ENCODE measurements at regions of chr2 and their contacts with region 1.

Region 1: GRCh38 chr2:230798769-230799399 is 65.9 kb upstream of the ITM2C start:
- DNase-seq: no peak
- ATAC-seq: no peak
- H3K4me3 ChIP-seq: no peak overlapping the region
- H3K27ac ChIP-seq: no peak overlapping the region
- H3K4me1 ChIP-seq: peaks cover 8% of the 10 kb centered on the region
- H3K27me3 ChIP-seq: no peaks in the 10 kb centered on the region

Region 2: DNA sequence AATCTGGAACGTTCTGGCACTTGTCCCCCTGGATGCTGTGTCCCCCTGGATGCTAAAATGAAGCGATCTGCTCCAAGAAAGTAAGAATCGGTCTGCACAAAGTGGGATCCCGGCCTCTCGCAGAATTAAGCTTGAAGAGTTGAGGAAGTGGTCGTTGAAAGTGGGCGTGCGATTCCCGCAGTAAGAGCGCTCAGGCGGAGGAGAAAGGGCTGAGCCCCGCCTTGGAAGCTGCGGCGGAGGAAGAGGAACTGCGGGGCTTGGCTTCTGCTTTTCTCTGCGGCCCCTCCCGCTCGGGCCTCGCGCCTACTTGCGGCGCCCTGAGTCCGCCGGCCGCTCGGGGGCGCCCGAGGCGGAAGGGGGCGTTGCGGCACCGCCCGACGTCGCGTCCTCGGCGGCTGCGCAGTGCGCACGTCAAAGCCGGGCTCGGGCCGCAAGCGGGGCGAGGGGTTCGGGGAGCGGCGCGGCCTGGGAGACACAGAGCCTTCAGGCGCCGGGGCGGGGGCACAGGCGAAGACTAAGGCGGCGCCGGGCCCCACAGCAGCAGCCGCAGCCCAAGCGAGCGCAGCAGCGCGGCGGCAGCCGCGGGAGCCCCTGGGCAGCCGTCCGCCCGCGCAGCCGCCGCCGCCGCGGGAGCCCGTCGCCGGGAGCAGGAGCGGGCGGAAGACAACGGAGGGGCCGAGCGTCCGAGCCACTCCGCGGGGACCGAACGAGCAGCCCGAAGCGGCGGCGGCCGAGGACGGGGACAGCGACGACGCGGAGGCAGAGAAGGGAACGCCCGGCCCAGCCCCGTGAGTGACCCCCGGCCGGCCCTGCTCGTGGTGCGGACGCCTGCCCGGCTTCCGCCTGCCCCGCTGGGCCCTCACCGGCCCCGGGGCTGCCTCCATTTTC is 86.2 kb before region 1 on chr2 and contains the start of gene CAB39:
- intact Hi-C with region 1: loop called (anchors 5 to 10 kb)
- DNase-seq: peak; percentile 90 to 96 (median 95)
- ATAC-seq: peak; percentile 96
- H3K4me3 ChIP-seq: peak within 1 kb of the TSS; percentile 100
- H3K27ac ChIP-seq: peak within 1 kb of the TSS; percentile 90
- H3K4me1 ChIP-seq: peaks cover 10% of the 10 kb centered on the region
- H3K27me3 ChIP-seq: no peaks in the 10 kb centered on the region
- total RNA-seq, gene CAB39: 83.6 to 100.0 (median 89.6) TPM

Measured in right cardiac atrium (tissue), 5 donors.